Left ventricle myocardium inferior (tissue), 1 donor: ENCODE measurements at regions of chr22 and their contacts with region 1.

Region 1: DNA sequence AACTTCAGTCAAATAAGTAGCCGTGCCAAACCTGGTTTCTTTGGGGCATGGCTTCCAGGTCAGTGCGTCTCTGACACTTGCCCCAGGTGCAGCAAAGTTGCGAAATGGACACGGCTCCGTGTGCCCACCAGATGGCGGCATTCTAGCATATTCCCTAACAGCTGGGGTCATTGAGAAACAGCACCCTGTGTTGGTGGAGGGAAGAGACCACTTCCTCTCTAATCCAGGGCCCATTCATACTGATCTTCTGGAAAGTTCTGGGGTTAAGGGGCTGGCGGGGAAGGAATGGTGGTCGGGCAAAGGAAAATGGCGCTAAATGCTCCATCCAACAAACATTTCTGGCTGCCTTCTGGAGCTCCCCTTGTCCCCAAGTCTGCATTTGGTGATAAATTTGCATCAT is 141.2 kb upstream of the TIMP3 start:
- DNase-seq: peak; percentile 70
- H3K4me3 ChIP-seq: no peak overlapping the region
- H3K27ac ChIP-seq: peak overlapping the region; percentile 79
- H3K4me1 ChIP-seq: peaks cover 18% of the 10 kb centered on the region
- H3K27me3 ChIP-seq: peaks cover 4% of the 10 kb centered on the region
- CTCF ChIP-seq: peak; percentile 85

Region 2: DNA sequence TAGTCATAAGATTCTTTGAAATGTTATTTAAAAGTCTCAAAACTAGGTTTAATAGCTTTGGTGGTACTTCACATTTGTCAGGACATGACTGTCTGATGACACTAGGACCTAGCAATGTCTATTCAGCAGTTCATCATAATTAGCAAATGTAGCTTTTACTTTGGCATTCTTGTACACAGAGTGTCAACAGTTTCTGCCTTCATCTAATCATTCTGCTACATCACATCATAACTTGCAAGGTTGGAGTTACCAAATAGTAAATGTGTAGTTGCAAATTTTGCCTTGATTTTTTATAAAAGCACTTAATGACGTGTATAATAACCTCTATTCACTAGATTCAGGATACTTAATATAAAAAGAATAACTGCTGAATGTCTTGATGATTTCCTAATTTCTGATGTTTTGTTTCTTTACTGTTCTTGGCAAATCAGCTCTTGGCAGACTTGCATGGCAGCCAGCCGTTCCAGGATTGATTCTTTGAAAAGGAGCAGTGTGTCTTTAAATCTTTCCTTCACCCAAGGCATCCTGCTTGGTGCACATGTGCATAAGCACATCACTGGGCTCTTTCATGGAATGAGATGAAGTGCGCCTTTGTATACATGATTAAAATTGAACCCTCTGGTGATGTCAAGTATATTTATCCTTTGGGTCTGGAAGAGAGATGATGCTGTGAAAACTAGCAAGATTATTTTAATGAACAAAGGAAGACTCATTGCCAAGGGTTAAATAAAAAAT is 173.5 kb before region 1 on chr22:
- intact Hi-C with region 1: no loop called
- DNase-seq: no peak
- H3K4me3 ChIP-seq: no peak overlapping the region
- H3K27ac ChIP-seq: no peak overlapping the region
- H3K4me1 ChIP-seq: peaks cover 27% of the 10 kb centered on the region
- H3K27me3 ChIP-seq: no peaks in the 10 kb centered on the region
- CTCF ChIP-seq: no peak

Region 3: GRCh38 chr22:32796865-32797573 is 136.7 kb after region 1 on chr22:
- intact Hi-C with region 1: loop called (anchors 2 kb)
- DNase-seq: peak; percentile 63
- H3K4me3 ChIP-seq: no peak overlapping the region
- H3K27ac ChIP-seq: peak overlapping the region; percentile 52
- H3K4me1 ChIP-seq: peaks cover 44% of the 10 kb centered on the region
- H3K27me3 ChIP-seq: no peaks in the 10 kb centered on the region
- CTCF ChIP-seq: peak; percentile 94

Region 4: GRCh38 chr22:32985899-32986765 is 325.8 kb after region 1 on chr22:
- intact Hi-C with region 1: loop called (anchors 5 kb)
- DNase-seq: peak; percentile 51
- H3K4me3 ChIP-seq: no peak overlapping the region
- H3K27ac ChIP-seq: peak overlapping the region; percentile 18
- H3K4me1 ChIP-seq: peaks cover 10% of the 10 kb centered on the region
- H3K27me3 ChIP-seq: no peaks in the 10 kb centered on the region
- CTCF ChIP-seq: peak; percentile 97

Region 5: DNA sequence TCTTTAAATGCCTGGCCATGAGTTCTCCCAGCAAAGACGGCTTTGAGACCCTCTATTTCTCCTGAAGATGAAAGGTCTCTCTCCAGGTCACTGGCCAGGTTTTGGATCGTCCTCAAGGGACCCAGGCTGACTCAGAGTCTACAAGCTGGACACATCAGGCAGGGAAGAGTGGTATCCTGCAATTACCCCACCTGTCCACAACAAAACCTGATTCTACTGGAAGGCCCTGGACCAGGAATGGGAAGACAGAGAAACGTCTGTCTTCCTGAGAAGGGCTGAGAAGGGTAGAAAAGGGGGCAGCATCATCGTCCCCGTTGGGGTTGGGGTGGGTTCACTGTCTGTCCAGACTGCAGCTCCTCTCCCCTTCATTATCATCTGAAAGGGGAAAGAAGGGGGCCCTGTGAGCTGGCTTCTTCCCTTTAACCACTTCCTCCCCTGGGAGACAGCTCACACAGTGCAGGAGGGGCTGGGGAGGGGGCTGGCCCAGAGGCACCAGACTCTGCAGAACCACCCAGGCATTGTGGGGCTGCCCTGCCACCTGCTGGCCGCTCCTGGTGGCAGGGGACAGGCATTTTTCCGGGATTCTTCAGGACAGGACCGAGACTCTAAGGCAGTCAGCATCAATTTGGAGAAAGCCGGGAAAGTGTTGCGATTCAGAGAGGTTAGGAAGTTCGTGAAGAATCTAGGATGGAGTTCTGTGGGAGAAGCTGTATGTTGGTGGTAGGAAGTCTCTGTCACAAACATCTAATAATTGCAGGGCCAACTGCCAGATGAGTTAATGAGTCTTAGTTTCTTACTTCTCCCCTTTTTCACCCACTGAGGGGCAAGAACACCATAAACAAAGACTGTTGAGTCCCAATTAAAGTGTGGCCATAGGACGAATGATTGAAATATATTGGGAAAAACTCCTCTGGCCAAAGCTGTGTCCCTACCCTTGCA is 340.3 kb after region 1 on chr22:
- intact Hi-C with region 1: loop called (anchors 5 kb)
- DNase-seq: peak; percentile 58
- H3K4me3 ChIP-seq: no peak overlapping the region
- H3K27ac ChIP-seq: no peak overlapping the region
- H3K4me1 ChIP-seq: peaks cover 17% of the 10 kb centered on the region
- H3K27me3 ChIP-seq: no peaks in the 10 kb centered on the region
- CTCF ChIP-seq: peak; percentile 94

Region 6: DNA sequence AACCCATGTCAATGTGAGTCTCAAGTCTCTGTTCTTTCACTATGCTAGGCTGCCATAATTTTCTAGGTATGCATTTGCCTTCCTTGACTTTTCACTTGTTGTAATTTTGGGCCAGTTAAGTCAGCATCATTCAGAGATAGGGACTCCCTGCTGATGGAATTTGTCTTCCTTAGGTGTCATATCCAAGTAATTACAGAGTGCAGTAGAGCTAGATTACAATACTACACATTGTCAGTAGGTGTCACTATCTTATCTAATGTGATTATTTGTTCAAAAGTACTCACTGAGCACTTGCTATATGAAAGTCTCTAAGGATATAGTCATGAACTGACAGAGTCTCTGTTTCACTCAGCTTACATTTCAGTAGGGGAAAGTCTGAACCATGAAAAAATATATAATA is 422.9 kb after region 1 on chr22:
- intact Hi-C with region 1: no loop called
- DNase-seq: no peak
- H3K4me3 ChIP-seq: no peak overlapping the region
- H3K27ac ChIP-seq: no peak overlapping the region
- H3K4me1 ChIP-seq: no peaks in the 10 kb centered on the region
- H3K27me3 ChIP-seq: peaks cover 41% of the 10 kb centered on the region
- CTCF ChIP-seq: no peak